Astrocyte of the cerebellum (primary cell): ENCODE measurements at regions of chr13 and their contacts with region 1.

Region 1: GRCh38 chr13:39266426-39266825 is 228.2 kb downstream of the NHLRC3 start:
- DNase-seq: no peak
- H3K4me3 ChIP-seq: no peak overlapping the region
- CTCF ChIP-seq: no peak

Region 2: DNA sequence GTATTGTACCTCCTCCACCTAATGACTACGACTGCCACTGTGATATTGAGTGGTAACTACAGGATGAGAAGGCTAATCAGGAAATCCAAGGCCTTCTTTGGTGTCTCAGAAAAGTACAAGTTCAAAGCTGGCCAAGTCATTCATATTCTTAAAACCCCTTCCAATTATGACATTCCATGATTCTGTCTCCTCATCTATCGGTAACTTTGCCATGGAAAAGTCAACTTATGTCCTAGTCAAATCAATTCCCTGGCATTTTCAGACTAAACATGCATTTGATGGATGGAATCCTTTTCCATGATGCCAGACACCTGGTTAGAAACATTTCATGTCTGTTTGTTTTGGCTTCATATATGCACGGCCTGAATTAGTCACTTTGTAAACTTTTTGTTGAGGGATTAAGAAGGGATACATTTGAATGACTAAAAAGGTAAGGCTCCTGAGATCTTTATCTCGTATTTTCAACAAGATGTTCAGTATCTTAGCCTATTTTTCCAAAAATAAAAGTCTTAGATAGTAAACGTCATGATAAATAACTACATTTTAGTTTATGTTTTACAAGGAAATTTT is 41.7 kb before region 1 on chr13:
- in situ Hi-C with region 1: loop called (anchors 5 kb)
- DNase-seq: no peak
- H3K4me3 ChIP-seq: no peak overlapping the region
- CTCF ChIP-seq: no peak

Region 3: GRCh38 chr13:39364947-39365484 is 98.6 kb after region 1 on chr13:
- in situ Hi-C with region 1: loop called (anchors 5 kb)
- DNase-seq: no peak
- H3K4me3 ChIP-seq: no peak overlapping the region
- CTCF ChIP-seq: no peak